ENCODE measurements at regions of chr1 and their contacts with region 1.

Region 1: GRCh38 chr1:145978854-145979759 is 14.6 kb downstream of the POLR3GL start:
- DNase-seq: peak; percentile 93 to 96 (median 94)
- ATAC-seq: peak; percentile 95 to 97
- H3K4me3 ChIP-seq: peak overlapping the region; percentile 39
- H3K27ac ChIP-seq: peak overlapping the region; percentile 100
- H3K4me1 ChIP-seq: peaks cover 27% of the 10 kb centered on the region
- H3K27me3 ChIP-seq: no peaks in the 10 kb centered on the region

Region 2: GRCh38 chr1:146007506-146008133 is 28.5 kb after region 1 on chr1:
- intact Hi-C with region 1: loop called in 3 of 4 experiments (anchors 2 to 5 kb)
- DNase-seq: no peak
- ATAC-seq: peak; percentile 13 to 18
- H3K4me3 ChIP-seq: no peak overlapping the region
- H3K27ac ChIP-seq: peak overlapping the region; percentile 72
- H3K4me1 ChIP-seq: peaks cover 4% of the 10 kb centered on the region
- H3K27me3 ChIP-seq: no peaks in the 10 kb centered on the region